Activated CD4-positive, alpha-beta T cell treated with anti-CD3 and anti-CD28 coated beads for 36 hours (primary cell): ENCODE measurements at regions of chr14 and their contacts with region 1.

Region 1: DNA sequence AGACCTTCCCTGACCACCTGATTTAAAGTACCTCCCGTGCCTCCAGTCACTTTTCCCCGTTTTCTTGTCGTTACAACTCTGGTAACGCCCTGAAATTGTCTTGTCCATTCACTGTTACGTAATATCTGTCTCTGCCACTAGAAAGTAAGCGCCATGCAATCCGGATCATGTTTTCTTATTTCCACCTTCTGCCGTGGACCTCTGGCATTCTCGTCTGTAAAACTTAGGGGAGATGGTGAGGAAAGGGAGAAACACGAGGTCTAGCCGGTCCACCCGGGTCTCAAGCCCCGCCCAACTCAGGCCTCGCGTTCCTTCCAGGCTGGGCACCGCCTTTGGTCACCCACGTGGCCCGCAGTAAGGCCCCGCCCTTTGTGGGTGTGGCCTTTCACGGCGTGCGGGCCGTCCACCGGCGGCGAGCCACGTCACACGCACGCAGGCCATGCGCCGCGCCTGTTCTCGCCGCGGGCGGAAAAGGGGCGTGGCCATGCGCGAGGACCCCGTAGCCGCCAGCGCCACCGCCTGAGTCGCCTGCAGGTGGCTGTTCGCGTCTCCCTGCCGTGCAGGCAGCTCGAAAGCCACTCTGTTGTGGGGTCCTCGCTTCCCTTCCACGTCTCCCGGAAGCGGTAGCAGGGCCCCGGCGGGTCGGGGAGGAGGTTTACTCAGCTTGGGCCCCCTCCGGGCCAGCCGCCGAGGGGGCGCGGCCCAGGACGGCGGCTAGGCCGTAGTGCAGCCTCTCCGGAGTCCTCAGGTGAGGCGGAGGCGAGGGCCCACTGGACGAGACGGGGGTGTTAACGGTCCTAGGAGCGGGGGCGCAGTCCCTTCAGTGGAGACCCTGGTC is at the start of gene GOLGA5:
- DNase-seq: peak; percentile 98
- ATAC-seq: peak; percentile 98
- H3K4me3 Mint-ChIP-seq: peak within 1 kb of the TSS; percentile 99
- H3K27ac Mint-ChIP-seq: peak within 1 kb of the TSS; percentile 96
- H3K4me1 Mint-ChIP-seq: peaks cover 40% of the 10 kb centered on the region
- H3K27me3 Mint-ChIP-seq: no peaks in the 10 kb centered on the region
- total RNA-seq, gene GOLGA5: 20.3 to 23.5 TPM

Region 2: GRCh38 chr14:92039719-92040430 is 754.1 kb before region 1 on chr14 and contains the start of gene TRIP11:
- CTCF ChIA-PET with region 1: no interaction called
- POLR2A ChIA-PET with region 1: no interaction called
- intact Hi-C with region 1: loop called in 1 of 2 experiments (anchors 5 kb)
- DNase-seq: peak; percentile 98
- ATAC-seq: peak; percentile 95
- H3K4me3 Mint-ChIP-seq: peak within 1 kb of the TSS; percentile 92
- H3K27ac Mint-ChIP-seq: peak within 1 kb of the TSS; percentile 98
- H3K4me1 Mint-ChIP-seq: peaks cover 42% of the 10 kb centered on the region
- H3K27me3 Mint-ChIP-seq: no peaks in the 10 kb centered on the region
- total RNA-seq, gene TRIP11: 35.7 to 41.0 TPM

Region 3: GRCh38 chr14:92121670-92122350 is 672.1 kb before region 1 on chr14 and contains the starts of genes CPSF2 and NDUFB1:
- CTCF ChIA-PET with region 1: no interaction called
- POLR2A ChIA-PET with region 1: no interaction called
- intact Hi-C with region 1: loop called in 1 of 2 experiments (anchors 1 kb)
- DNase-seq: peak; percentile 90
- ATAC-seq: peak; percentile 92
- H3K4me3 Mint-ChIP-seq: peak within 1 kb of the TSS; percentile 77
- H3K27ac Mint-ChIP-seq: peak within 1 kb of the TSS; percentile 100
- H3K4me1 Mint-ChIP-seq: peaks cover 34% of the 10 kb centered on the region
- H3K27me3 Mint-ChIP-seq: no peaks in the 10 kb centered on the region
- total RNA-seq, gene CPSF2: 102 to 117 TPM
- total RNA-seq, gene NDUFB1: 68.9 to 118 TPM

Region 4: DNA sequence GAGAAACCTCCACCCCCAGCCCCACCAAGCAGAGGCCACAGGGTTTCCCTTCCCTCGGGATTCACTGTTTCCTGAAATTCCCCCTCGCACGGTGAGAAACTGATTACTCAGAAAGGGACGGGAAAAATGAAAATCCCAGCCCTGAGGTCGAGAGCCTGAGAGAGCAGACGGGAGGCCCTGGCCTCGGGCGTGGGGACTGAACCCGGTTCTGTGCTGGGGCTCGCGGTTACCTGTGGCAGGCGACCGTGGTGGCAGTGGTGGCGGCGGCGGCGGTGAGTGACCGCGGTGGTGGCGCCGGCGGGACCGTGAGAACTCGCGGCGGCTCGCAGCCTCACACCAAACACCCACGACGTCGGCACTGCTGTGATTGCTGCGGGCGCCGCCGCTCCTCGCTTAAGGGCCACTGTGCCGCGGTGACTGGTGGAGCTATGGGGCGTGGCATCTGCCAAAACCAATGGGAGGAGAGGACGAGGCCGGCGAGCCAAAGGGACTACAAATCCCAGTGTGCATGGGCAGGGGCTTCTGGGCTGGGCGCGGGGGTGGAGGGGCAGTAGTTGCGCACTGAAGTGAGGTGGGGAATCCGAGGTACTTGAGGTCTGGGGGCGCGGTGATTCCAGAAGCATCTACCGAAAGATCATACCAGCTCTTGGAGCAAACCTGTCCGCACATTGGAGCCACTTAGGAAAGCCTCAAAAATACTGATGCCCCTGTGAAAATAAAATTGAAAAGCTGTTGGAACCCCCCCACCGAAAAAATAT is 45.5 kb before region 1 on chr14 and contains the start of gene LGMN:
- CTCF ChIA-PET with region 1: interaction called, 6 read pairs
- POLR2A ChIA-PET with region 1: no interaction called
- intact Hi-C with region 1: loop called in 1 of 2 experiments (anchors 1 kb)
- DNase-seq: peak; percentile 90
- ATAC-seq: peak; percentile 97
- H3K4me3 Mint-ChIP-seq: peak within 1 kb of the TSS; percentile 75
- H3K27ac Mint-ChIP-seq: peak within 1 kb of the TSS; percentile 45
- H3K4me1 Mint-ChIP-seq: peaks cover 29% of the 10 kb centered on the region
- H3K27me3 Mint-ChIP-seq: peaks cover 23% of the 10 kb centered on the region
- total RNA-seq, gene LGMN: 3.2 to 5.6 TPM

Region 5: GRCh38 chr14:93206793-93207467 is 413.0 kb after region 1 on chr14 and contains the starts of genes GON7 and UBR7:
- CTCF ChIA-PET with region 1: no interaction called
- POLR2A ChIA-PET with region 1: no interaction called
- intact Hi-C with region 1: loop called in 1 of 2 experiments (anchors 1 kb)
- DNase-seq: peak; percentile 94
- ATAC-seq: peak; percentile 94
- H3K4me3 Mint-ChIP-seq: peak within 1 kb of the TSS; percentile 96
- H3K27ac Mint-ChIP-seq: peak within 1 kb of the TSS; percentile 97
- H3K4me1 Mint-ChIP-seq: peaks cover 35% of the 10 kb centered on the region
- H3K27me3 Mint-ChIP-seq: no peaks in the 10 kb centered on the region
- total RNA-seq, gene GON7: 9.9 to 12.9 TPM
- total RNA-seq, gene UBR7: 36.5 to 39.9 TPM